A673 (cell line): ENCODE measurements at regions of chr7 and their contacts with region 1.

Region 1: GRCh38 chr7:12524794-12525386 is 45.6 kb upstream of the SCIN start:
- DNase-seq: peak; percentile 65
- H3K4me3 ChIP-seq: no peak overlapping the region
- H3K27ac ChIP-seq: no peak overlapping the region
- H3K4me1 ChIP-seq: no peaks in the 10 kb centered on the region
- H3K27me3 ChIP-seq: peaks cover 6% of the 10 kb centered on the region
- CTCF ChIP-seq: peak; percentile 66

Region 2: GRCh38 chr7:12623897-12624498 is 99.1 kb after region 1 on chr7:
- CTCF ChIA-PET with region 1: interaction called, 9 read pairs
- POLR2A ChIA-PET with region 1: no interaction called
- intact Hi-C with region 1: loop called (anchors 1 kb)
- DNase-seq: peak; percentile 56
- H3K4me3 ChIP-seq: peak overlapping the region; percentile 3
- H3K27ac ChIP-seq: no peak overlapping the region
- H3K4me1 ChIP-seq: no peaks in the 10 kb centered on the region
- H3K27me3 ChIP-seq: no peaks in the 10 kb centered on the region
- CTCF ChIP-seq: peak; percentile 81

Region 3: GRCh38 chr7:12674849-12675248 is 150.0 kb after region 1 on chr7:
- CTCF ChIA-PET with region 1: no interaction called
- POLR2A ChIA-PET with region 1: no interaction called
- intact Hi-C with region 1: loop called (anchors 5 kb)
- DNase-seq: peak; percentile 70
- H3K4me3 ChIP-seq: no peak overlapping the region
- H3K27ac ChIP-seq: no peak overlapping the region
- H3K4me1 ChIP-seq: no peaks in the 10 kb centered on the region
- H3K27me3 ChIP-seq: no peaks in the 10 kb centered on the region
- CTCF ChIP-seq: peak; percentile 75

Region 4: DNA sequence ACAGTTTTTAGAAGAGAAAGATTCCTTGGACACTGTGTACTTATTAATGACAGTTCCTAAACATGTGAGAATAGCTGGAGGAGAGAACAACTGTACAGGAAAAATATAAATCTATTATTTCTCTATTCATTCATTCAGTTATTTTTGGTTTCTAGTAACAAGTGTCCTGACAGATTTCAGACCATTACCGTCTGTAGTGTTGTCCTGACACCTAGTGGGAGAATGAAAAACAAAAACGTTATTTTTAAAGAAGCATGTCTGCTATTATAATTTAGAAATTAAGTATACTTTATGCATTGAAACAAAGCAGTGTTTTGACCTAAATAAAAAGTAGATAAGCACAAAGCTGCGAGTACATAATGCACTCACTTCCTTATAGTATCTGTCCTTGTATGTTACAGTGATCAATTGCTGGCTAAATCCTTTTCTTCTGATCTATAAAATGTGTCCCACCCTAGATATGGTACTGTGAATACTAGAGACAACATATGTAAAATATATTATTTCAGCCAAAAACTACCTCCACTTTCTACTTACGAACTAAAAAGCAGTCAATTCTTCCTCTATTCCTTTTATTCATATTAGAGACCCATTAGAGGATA is 738.1 kb after region 1 on chr7:
- CTCF ChIA-PET with region 1: no interaction called
- POLR2A ChIA-PET with region 1: no interaction called
- intact Hi-C with region 1: loop called (anchors 2 kb)
- DNase-seq: peak; percentile 52
- H3K4me3 ChIP-seq: no peak overlapping the region
- H3K27ac ChIP-seq: no peak overlapping the region
- H3K4me1 ChIP-seq: no peaks in the 10 kb centered on the region
- H3K27me3 ChIP-seq: peaks cover 7% of the 10 kb centered on the region
- CTCF ChIP-seq: peak; percentile 68